ENCODE measurements at regions of chr2 and their contacts with region 1.

Region 1: DNA sequence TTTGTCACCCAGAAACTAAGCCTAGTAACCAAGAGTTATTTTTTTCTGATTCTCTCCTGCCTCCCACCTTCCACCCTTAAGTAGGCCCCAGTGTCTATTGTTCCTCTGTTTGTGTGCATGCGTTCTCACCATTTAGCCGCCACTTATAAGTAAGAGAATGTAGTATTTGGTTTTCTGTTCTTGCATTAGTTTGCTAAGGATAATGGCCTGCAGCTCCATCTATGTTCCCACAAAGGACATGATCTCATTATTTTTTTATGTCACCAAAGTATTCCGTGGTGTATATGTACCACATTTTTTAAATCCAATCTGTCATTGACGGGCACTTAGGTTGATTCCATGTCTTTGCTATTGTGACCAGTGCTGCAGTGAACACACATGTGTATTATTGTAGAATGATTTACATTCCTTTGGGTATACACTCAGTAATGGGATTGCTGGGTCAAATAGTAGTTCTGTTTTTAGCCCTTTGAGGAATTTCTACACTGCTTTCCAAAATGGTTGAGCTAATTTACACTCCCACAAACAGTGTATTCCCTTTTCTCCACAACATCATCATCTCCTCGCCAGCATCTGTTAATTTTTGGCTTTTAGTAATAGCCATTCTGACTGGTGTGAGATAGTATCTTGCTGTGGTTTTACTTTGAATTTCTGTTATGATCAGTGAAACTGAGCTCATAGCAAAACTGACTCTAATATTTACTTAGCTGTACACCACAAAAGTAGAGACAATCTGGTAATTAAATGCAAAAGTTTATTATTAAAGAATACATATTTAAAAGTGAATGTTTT is 660.1 kb upstream of the SLC8A1 start:
- DNase-seq: no peak
- ATAC-seq: peak; percentile 34

Region 2: DNA sequence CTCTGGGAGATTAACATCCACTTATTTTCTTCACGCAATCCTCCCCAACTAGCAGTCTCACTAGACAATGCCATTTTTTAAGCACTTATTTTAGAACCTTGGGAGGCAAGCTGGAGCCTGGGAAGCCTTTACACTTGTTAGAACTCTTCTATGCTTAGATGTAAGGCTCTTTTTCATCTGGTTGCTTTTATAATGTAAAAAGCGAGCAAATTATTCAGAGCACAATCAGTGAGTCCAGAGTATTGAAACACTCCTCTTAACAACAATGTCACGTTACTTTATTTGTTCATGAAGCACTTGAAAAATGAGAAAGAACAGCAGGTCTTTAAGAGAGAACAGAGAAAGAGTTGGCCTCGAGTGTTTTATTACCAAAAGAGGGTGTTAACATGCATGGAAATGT is 576.1 kb before region 1 on chr2:
- intact Hi-C with region 1: loop called (anchors 5 kb)
- DNase-seq: no peak
- ATAC-seq: no peak

Region 3: DNA sequence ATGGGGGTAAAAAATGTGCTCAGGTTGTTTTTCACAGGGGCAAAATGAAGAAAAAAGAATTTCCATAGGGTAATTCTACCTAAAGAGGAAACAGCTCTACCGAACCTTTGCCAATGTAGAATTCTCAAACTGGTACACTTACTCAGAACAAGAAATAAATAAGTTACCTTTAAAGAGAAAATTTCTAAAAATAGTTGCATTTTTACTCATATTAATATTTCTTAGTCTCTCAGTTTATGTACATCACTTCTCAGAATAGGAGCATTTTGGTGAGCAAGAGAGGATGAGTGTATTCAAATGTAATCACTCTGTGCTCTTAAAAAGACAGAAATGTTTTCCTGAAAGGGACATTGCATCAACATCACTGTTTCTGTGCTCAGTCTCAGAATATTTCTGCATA is 85.4 kb before region 1 on chr2:
- intact Hi-C with region 1: no loop called
- DNase-seq: no peak
- ATAC-seq: no peak

Region 4: GRCh38 chr2:41079011-41079410 is 33.0 kb before region 1 on chr2:
- intact Hi-C with region 1: no loop called
- DNase-seq: no peak
- ATAC-seq: no peak

Region 5: GRCh38 chr2:41241325-41242000 is 129.4 kb after region 1 on chr2:
- intact Hi-C with region 1: no loop called
- DNase-seq: no peak
- ATAC-seq: peak; percentile 95